Activated CD4-positive, alpha-beta T cell treated with anti-CD3 and anti-CD28 coated beads for 36 hours (primary cell): ENCODE measurements at regions of chr22 and their contacts with region 1.

Region 1: GRCh38 chr22:37807410-37808293 is at the start of gene GCAT:
- DNase-seq: peak; percentile 97
- ATAC-seq: peak; percentile 97
- H3K4me3 Mint-ChIP-seq: peak within 1 kb of the TSS; percentile 78
- H3K27ac Mint-ChIP-seq: peak within 1 kb of the TSS; percentile 31
- H3K4me1 Mint-ChIP-seq: peaks cover 41% of the 10 kb centered on the region
- H3K27me3 Mint-ChIP-seq: peaks cover 37% of the 10 kb centered on the region
- total RNA-seq, gene GCAT: 21.3 to 22.4 TPM

Region 2: GRCh38 chr22:37581504-37581903 is 226.1 kb before region 1 on chr22:
- CTCF ChIA-PET with region 1: no interaction called
- POLR2A ChIA-PET with region 1: no interaction called
- intact Hi-C with region 1: no loop called
- DNase-seq: no peak
- ATAC-seq: no peak
- H3K4me3 Mint-ChIP-seq: no peak overlapping the region
- H3K27ac Mint-ChIP-seq: no peak overlapping the region
- H3K4me1 Mint-ChIP-seq: peaks cover 12% of the 10 kb centered on the region
- H3K27me3 Mint-ChIP-seq: no peaks in the 10 kb centered on the region

Region 3: DNA sequence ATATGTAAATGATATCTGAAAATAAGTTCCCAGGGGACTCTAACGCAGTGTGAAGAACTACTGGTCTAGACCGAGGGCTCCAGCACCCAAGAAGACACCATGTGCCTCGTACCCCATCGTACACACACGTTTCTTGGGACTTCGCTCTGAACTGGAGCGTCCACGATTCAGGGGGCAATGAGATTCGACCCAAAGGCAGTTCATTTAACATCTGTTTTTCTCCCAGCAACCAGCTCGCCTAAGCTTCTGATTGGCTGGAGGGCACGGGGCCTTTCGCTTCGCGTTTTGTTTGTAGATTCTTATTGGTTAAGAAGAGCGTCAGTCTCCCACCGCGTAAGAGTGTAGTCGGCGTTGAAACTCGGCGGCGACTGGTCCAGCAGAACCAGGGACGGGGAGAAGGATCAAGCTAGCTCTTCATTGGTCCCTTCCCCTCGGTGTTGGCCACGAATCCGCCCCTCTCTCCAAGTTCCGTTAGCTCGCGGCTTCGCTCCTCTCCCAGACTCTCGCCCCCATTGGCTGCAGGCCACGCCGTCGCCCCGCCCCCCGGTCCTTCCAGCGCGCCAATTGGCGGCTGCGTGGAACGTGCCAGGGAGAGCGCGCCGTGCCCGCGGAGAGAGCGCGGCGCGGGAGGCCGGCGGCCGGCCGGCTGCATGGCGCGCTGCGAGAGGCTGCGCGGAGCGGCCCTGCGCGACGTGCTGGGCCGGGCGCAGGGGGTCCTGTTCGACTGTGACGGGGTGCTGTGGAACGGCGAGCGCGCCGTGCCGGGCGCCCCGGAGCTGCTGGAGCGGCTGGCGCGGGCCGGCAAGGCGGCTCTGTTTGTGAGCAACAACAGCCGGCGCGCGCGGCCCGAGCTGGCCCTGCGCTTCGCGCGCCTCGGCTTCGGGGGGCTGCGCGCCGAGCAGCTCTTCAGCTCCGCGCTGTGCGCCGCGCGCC is 149.3 kb before region 1 on chr22 and contains the start of gene PDXP:
- CTCF ChIA-PET with region 1: interaction called, 3 read pairs
- POLR2A ChIA-PET with region 1: interaction called, 5 read pairs
- intact Hi-C with region 1: loop called in 1 of 2 experiments (anchors 1 kb)
- DNase-seq: peak; percentile 99
- ATAC-seq: peak; percentile 98
- H3K4me3 Mint-ChIP-seq: peak within 1 kb of the TSS; percentile 86
- H3K27ac Mint-ChIP-seq: peak within 1 kb of the TSS; percentile 91
- H3K4me1 Mint-ChIP-seq: peaks cover 31% of the 10 kb centered on the region
- H3K27me3 Mint-ChIP-seq: no peaks in the 10 kb centered on the region
- total RNA-seq, gene PDXP: 35.8 to 37.8 TPM

Region 4: GRCh38 chr22:37745548-37746365 is 61.9 kb before region 1 on chr22:
- CTCF ChIA-PET with region 1: no interaction called
- POLR2A ChIA-PET with region 1: no interaction called
- intact Hi-C with region 1: loop called in 1 of 2 experiments (anchors 1 kb)
- DNase-seq: peak; percentile 95
- ATAC-seq: peak; percentile 91
- H3K4me3 Mint-ChIP-seq: peak overlapping the region; percentile 84
- H3K27ac Mint-ChIP-seq: peak overlapping the region; percentile 90
- H3K4me1 Mint-ChIP-seq: peaks cover 25% of the 10 kb centered on the region
- H3K27me3 Mint-ChIP-seq: no peaks in the 10 kb centered on the region

Region 5: GRCh38 chr22:37905534-37906363 is 98.1 kb after region 1 on chr22 and contains the start of gene MICALL1:
- CTCF ChIA-PET with region 1: interaction called, 3 read pairs
- POLR2A ChIA-PET with region 1: no interaction called
- intact Hi-C with region 1: loop called in 1 of 2 experiments (anchors 1 kb)
- DNase-seq: peak; percentile 80
- ATAC-seq: peak; percentile 86
- H3K4me3 Mint-ChIP-seq: peak within 1 kb of the TSS; percentile 72
- H3K27ac Mint-ChIP-seq: peak within 1 kb of the TSS; percentile 79
- H3K4me1 Mint-ChIP-seq: peaks cover 21% of the 10 kb centered on the region
- H3K27me3 Mint-ChIP-seq: no peaks in the 10 kb centered on the region
- total RNA-seq, gene MICALL1: 11.2 to 11.8 TPM

Region 6: DNA sequence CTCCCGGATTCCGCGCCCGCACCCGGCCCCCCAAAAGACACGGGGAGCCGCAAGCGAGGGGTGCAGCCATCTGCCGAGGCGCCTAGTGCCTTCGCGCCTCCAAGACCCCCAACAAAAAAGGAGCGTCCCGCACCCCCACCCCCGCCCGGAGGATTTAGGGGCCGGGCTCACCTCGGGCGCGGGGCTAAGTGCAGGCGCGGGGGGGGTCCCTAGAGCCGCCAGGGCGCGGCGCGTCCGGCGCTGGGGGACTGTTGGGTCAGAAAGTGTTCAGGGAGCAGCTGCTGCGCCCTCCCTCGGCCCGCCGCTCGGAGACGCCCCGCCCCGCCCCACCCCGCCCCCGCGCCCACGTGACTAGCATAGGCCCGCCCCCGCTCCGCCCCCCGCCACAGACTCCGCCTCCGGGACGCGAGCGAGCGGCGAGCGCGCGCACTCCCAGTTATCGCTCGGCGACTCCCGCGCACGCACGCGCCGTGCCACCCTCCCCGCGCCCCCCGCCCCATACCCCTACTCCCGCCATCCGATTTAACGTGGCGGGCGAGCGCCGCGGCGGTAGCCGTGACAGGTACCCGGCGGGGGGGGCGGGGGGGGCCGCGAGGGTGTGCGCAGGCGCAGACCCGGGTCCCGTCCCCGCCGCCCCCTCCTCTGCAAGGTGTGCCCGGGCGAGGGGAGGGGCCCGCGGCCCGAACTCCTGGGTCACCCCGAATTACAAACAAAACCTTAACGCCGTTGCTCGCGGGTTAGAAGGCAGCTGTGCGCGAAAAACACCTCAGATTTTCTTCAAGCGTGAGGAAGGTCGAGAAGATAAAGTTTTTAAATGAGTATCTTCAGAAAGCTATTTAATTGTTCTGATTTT is 591.2 kb after region 1 on chr22:
- CTCF ChIA-PET with region 1: no interaction called
- POLR2A ChIA-PET with region 1: no interaction called
- intact Hi-C with region 1: loop called in 1 of 2 experiments (anchors 5 kb)
- DNase-seq: peak; percentile 92
- ATAC-seq: peak; percentile 67
- H3K4me3 Mint-ChIP-seq: peak overlapping the region; percentile 72
- H3K27ac Mint-ChIP-seq: peak overlapping the region; percentile 47
- H3K4me1 Mint-ChIP-seq: peaks cover 38% of the 10 kb centered on the region
- H3K27me3 Mint-ChIP-seq: no peaks in the 10 kb centered on the region